ENCODE measurements at regions of chr1 and their contacts with region 1.

Region 1: GRCh38 chr1:24695202-24695974 is 49.9 kb upstream of the CLIC4 start:
- DNase-seq: peak; percentile 34
- H3K4me3 Mint-ChIP-seq: no peak overlapping the region
- H3K27ac Mint-ChIP-seq: peak overlapping the region; percentile 64
- H3K4me1 Mint-ChIP-seq: peaks cover 35% of the 10 kb centered on the region
- H3K27me3 Mint-ChIP-seq: peaks cover 7% of the 10 kb centered on the region

Region 2: GRCh38 chr1:24619376-24619775 is 76.0 kb before region 1 on chr1:
- CTCF ChIA-PET with region 1: no interaction called
- POLR2A ChIA-PET with region 1: no interaction called
- DNase-seq: no peak
- H3K4me3 Mint-ChIP-seq: no peak overlapping the region
- H3K27ac Mint-ChIP-seq: no peak overlapping the region
- H3K4me1 Mint-ChIP-seq: no peaks in the 10 kb centered on the region
- H3K27me3 Mint-ChIP-seq: peaks cover 40% of the 10 kb centered on the region

Region 3: DNA sequence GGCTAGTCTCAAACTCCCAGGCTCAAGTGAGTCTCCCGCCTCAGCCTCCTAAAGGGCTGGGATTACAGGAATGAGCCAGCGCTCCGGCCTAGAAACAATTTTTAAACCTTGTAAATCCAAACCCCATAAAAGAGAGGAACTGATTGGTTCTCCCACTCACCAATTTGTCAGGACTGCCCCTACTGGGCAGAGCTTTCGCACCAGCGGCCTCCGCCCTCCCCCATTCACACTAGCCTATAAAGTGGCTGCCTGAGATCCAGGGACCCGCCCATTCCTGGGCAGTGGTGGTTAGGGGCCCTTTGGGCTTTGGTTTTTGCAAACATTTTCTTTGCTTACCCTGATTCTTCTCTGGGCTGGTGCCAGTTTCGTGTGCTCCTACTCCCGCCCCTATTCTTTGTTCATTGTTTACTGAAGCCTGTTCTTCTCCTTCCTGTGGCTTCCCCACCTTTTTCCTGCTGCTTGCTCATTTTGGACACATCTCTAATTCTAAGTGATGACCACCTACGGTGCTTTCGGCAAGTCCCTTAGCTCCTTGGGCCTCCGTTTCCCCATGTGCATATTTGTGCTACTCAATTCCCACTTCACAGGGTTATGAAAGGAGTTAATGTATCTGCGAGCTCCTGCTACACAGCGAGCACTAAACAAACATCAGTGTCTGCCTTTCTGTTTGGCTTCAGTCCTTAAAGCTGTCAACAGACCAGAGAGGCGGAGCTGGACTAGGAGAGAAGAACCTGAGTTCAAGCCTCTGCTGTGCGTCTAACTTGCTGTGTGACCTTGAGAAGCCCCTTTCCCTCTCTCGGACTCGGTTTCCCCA is 10.1 kb after region 1 on chr1:
- CTCF ChIA-PET with region 1: no interaction called
- POLR2A ChIA-PET with region 1: interaction called, 11 read pairs
- DNase-seq: peak; percentile 59
- H3K4me3 Mint-ChIP-seq: no peak overlapping the region
- H3K27ac Mint-ChIP-seq: peak overlapping the region; percentile 75
- H3K4me1 Mint-ChIP-seq: peaks cover 44% of the 10 kb centered on the region
- H3K27me3 Mint-ChIP-seq: no peaks in the 10 kb centered on the region

Region 4: DNA sequence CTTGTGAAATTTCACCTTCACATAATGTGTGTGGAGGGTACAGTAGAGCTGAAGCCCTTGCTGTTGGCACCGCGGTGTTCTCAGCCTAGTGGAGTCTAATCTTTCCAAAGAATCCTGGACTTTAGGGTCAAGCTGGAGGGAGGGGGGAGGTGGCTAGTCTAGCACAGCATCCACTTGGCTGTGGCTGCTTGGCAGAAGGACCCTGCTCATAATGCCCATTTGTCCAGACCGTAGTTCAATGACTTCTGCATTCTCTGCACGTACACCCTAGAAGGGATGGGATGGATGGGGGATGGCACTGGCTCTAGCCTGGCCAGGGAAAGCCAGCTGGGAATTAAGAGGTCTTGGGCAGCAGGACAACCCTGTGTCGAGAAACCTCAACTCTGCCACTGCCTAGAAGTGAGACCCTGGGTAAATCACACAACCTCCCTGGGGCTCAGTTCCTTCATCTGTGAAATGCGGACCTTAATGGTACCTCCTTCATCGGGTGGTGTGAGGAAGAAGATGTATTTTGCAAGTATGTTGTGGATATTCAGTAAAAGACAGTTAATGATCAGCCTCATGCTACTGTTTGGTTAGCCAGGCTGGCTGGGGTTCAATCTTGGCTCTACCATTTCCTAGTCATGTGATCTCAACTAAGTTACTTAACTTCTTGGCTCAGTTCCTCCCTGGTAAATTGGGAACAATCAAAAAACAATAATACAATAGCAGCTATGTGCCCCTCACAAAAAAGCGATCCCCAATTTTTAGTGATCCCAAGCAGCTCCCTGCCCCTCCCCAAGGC is 22.7 kb after region 1 on chr1:
- CTCF ChIA-PET with region 1: no interaction called
- POLR2A ChIA-PET with region 1: no interaction called
- DNase-seq: no peak
- H3K4me3 Mint-ChIP-seq: no peak overlapping the region
- H3K27ac Mint-ChIP-seq: no peak overlapping the region
- H3K4me1 Mint-ChIP-seq: peaks cover 11% of the 10 kb centered on the region
- H3K27me3 Mint-ChIP-seq: no peaks in the 10 kb centered on the region